Spleen (tissue), 13 donors: ENCODE measurements at regions of chr4 and their contacts with region 1.

Region 1: DNA sequence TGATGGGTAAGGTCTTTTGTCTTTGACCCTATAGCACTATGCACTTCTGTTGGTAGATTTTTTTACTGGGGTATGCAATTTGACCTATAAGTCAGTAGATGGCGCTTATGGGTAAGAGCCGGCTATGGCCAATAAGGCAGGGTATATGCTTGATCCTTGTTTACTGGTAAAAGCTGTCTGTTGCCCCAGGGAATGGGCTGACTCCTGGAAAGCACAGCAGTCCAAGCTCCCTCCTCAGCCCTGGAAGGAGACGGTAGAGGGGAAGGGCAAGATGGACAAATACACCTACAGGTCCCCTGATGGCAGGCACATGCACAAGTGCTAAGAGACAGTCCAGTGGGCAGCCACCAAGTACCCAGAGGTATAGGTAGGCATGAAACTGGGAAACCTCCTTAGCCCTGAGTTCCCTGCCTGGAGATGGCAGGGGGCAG is 63.7 kb downstream of the ADAMTS3 start:
- DNase-seq: peak; percentile 27
- H3K4me3 ChIP-seq: no peak overlapping the region
- H3K27ac ChIP-seq: no peak overlapping the region
- H3K4me1 ChIP-seq: no peaks in the 10 kb centered on the region
- H3K27me3 ChIP-seq: peaks cover 0 to 6% (median 0%) of the 10 kb centered on the region in 7 donors
- CTCF ChIP-seq: peak in 8 of 11 experiments; percentile 16 to 64 (median 56)
- POLR2A ChIP-seq: no peak

Region 2: DNA sequence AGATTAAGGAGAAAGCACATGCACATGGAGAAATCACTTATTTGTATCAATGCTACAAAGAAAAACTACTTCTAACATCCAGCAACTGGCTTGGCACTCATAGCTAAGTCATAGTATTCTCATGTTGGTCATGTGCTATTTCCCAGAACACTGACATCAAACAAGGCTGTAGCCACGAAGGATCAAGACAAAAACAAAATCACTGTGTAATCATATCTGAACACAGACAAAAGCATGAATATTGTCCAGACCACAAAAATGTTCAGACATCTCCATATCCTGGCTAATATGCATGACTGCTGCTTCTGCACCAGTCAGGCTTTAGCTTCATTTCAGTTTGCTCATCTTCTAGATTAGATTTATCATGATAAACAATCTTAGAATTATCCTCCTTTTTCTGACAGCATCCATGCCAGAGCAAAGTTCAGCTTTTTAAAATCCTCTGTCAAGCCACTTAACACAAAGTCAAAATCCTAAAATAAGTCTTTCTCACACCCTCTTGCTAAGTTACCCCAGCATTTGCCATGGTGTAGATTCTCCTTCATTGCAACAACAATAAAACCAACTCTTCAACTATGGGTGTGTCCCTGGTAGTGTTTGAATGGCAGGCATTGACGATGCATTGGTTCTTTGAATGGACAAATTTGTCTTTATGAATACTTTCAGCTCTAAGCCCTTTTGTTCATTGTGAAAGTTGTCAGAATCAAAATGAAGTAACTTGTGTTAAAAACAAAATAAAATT is 512.6 kb before region 1 on chr4:
- intact Hi-C with region 1: no loop called
- DNase-seq: no peak
- H3K4me3 ChIP-seq: no peak overlapping the region
- H3K27ac ChIP-seq: no peak overlapping the region
- H3K4me1 ChIP-seq: no peaks in the 10 kb centered on the region
- H3K27me3 ChIP-seq: no peaks in the 10 kb centered on the region
- CTCF ChIP-seq: no peak
- POLR2A ChIP-seq: no peak

Region 3: GRCh38 chr4:72631296-72631695 is 126.0 kb after region 1 on chr4:
- intact Hi-C with region 1: no loop called
- DNase-seq: no peak
- H3K4me3 ChIP-seq: no peak overlapping the region
- H3K27ac ChIP-seq: no peak overlapping the region
- H3K4me1 ChIP-seq: no peaks in the 10 kb centered on the region
- H3K27me3 ChIP-seq: no peaks in the 10 kb centered on the region
- CTCF ChIP-seq: no peak
- POLR2A ChIP-seq: no peak

Region 4: DNA sequence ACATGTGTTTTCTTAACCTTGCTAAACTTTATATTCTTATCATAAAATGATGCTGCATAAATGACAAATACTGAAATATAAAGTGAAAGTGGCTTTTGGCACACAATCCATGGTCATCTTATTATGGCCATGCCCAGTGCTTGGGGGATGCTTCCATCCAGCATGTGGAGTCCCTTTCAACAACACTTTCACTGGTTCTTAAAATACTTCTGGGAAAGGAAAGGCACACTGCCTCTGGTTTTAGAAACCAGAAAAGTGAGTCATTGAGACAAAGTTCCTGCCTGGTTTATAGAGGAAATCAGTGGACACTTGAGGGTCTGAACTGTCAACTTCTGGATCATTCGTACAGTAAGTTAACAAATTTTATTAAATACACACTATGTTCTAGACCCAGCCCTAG is 311.7 kb after region 1 on chr4:
- intact Hi-C with region 1: no loop called
- DNase-seq: no peak
- H3K4me3 ChIP-seq: no peak overlapping the region
- H3K27ac ChIP-seq: no peak overlapping the region
- H3K4me1 ChIP-seq: no peaks in the 10 kb centered on the region
- H3K27me3 ChIP-seq: no peaks in the 10 kb centered on the region
- CTCF ChIP-seq: no peak
- POLR2A ChIP-seq: no peak

Region 5: DNA sequence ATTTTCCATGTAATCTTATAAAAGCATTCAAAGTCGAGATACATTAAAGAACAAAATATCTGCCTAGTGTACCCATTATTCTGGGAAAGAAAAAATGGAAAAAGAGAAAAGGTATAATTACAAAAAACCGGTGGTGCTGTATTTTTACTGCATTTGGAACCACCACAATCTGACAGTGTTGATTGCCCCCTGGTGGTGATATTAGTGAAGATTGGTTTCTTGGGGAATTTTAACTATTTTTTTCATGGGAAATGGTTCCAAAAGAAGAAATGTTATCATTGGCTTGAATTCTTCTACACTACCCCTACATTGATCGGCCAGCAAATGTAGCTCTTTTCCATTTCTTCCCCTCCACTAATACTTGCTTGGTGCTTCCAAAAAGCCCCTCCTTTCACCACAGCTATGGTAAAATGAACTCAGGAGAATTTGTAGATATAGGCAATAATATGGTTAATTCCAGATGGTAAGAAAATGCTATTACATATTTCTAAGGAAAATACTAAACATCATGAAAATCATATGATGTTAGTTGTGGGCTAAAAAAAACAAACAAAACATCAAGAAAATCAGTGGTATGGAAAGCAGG is 514.2 kb after region 1 on chr4:
- intact Hi-C with region 1: loop called (anchors 10 kb)
- DNase-seq: no peak
- H3K4me3 ChIP-seq: no peak overlapping the region
- H3K27ac ChIP-seq: no peak overlapping the region
- H3K4me1 ChIP-seq: no peaks in the 10 kb centered on the region
- H3K27me3 ChIP-seq: no peaks in the 10 kb centered on the region
- CTCF ChIP-seq: peak in 10 of 11 experiments; percentile 10 to 73 (median 57)
- POLR2A ChIP-seq: no peak